ENCODE measurements at regions of chr15 and their contacts with region 1.

Region 1: DNA sequence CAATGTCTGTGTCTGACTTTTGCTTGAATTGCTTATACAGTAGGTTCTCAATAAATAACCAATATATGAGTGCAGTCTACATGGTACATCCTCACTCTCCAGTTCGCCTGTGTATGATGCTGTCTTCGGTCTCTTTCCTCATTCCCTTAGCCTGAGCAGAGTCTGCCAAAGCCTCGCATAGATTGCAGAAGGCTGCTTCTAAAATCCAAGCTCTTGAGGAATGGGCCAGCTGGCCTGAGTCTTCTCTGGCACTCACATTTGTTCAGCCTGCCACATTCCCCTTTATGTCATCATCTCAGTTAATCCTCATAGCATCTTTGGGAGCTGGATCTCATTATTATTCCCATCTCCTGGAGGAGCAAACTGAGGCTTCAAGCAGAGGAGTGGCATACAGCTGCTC is 27.2 kb upstream of the ADAMTS7 start:
- DNase-seq: no peak
- H3K4me3 ChIP-seq: no peak overlapping the region
- H3K27ac ChIP-seq: no peak overlapping the region
- H3K4me1 ChIP-seq: no peaks in the 10 kb centered on the region
- H3K27me3 ChIP-seq: peaks cover 0 to 4% of the 10 kb centered on the region in 2 experiments
- CTCF ChIP-seq: no peak
- POLR2A ChIP-seq: no peak

Region 2: GRCh38 chr15:78599189-78599588 is 239.3 kb before region 1 on chr15:
- CTCF ChIA-PET with region 1: no interaction called
- POLR2A ChIA-PET with region 1: no interaction called
- dilution Hi-C with region 1: no loop called
- intact Hi-C with region 1: no loop called
- DNase-seq: no peak
- H3K4me3 ChIP-seq: no peak overlapping the region
- H3K27ac ChIP-seq: no peak overlapping the region
- H3K4me1 ChIP-seq: no peaks in the 10 kb centered on the region
- H3K27me3 ChIP-seq: no peaks in the 10 kb centered on the region
- CTCF ChIP-seq: no peak
- POLR2A ChIP-seq: no peak

Region 3: DNA sequence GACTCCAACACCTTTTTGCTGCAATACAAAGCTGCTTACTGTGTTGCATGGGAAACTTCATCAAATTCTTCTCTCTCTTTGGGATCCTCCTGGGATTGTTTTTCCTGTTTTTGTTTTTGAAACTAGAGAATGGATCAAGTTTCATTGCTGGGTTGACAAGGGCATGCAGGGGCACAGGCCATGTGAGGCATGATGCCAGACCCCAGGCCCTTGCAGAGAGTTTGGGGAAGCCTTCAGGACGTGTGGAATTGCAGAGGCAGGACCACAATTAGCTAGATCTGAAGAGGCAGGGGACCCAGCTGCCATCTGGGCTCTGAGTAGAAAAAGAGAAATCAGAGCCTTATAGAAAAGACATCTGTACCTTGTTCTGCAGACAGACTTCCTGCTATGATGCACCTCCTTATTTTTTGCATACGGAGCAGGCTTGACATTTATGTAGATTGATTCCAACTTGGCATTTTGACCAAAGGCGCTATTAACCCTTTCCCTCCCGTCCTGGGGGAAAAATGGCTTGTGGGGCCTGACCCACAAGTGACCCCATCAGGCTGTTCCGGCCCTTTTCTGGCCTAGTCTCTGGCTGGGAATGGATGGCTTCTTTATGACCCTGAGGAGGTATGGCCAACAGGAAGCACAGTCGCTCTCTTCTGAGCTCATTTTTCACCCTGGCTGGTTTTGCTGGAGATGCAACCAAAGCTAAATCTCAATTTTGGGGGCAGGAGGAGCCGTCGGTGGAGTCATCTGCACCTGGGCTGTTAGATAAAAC is 153.1 kb before region 1 on chr15:
- CTCF ChIA-PET with region 1: no interaction called
- POLR2A ChIA-PET with region 1: no interaction called
- dilution Hi-C with region 1: no loop called
- intact Hi-C with region 1: no loop called
- DNase-seq: no peak
- H3K4me3 ChIP-seq: no peak overlapping the region
- H3K27ac ChIP-seq: no peak overlapping the region
- H3K4me1 ChIP-seq: no peaks in the 10 kb centered on the region
- H3K27me3 ChIP-seq: peaks cover 0 to 10% of the 10 kb centered on the region in 2 experiments
- CTCF ChIP-seq: no peak
- POLR2A ChIP-seq: no peak

Region 4: DNA sequence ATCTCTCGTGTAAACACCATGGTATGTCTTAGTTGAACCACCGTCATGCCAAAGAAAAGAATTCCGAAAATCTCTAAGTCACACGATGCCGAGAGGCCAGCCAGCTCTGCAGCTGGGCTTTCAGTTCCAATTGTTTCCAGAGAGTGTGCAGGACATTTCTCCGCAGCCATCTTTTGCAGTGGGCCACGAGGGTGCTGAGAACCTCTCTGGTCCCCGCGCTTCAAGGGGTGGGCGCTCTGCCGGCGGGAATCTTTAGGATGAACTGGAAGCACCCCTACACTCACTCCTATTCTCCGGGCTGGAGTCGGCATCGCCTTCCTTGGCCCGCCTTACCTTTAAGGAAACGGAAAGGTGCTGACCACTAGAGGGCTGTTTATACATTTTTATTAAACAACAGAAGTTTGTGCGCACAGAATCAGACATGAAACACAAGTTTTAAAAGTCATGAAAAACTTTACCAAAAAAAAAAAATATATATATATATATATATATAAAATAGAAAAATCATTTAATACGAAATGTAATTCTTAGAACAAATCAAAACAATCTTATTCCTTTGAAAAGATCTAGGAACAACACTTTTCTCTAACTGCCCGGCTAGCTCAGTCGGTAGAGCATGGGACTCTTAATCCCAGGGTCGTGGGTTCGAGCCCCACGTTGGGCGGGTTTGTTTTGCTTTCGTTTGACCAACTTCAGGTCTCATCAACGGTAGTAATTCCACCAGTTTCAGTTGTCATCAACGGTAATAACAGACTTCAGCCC is 21.7 kb after region 1 on chr15:
- CTCF ChIA-PET with region 1: interaction called, 3 read pairs
- POLR2A ChIA-PET with region 1: no interaction called
- dilution Hi-C with region 1: no loop called
- intact Hi-C with region 1: loop called (anchors 2 kb)
- DNase-seq: peak; percentile 76
- H3K4me3 ChIP-seq: peak overlapping the region; percentile 47 to 83 (median 74)
- H3K27ac ChIP-seq: peak overlapping the region; percentile 61
- H3K4me1 ChIP-seq: peaks cover 5% of the 10 kb centered on the region
- H3K27me3 ChIP-seq: peaks cover 0 to 2% of the 10 kb centered on the region in 2 experiments
- CTCF ChIP-seq: peak; percentile 42 to 44
- POLR2A ChIP-seq: no peak

Region 5: DNA sequence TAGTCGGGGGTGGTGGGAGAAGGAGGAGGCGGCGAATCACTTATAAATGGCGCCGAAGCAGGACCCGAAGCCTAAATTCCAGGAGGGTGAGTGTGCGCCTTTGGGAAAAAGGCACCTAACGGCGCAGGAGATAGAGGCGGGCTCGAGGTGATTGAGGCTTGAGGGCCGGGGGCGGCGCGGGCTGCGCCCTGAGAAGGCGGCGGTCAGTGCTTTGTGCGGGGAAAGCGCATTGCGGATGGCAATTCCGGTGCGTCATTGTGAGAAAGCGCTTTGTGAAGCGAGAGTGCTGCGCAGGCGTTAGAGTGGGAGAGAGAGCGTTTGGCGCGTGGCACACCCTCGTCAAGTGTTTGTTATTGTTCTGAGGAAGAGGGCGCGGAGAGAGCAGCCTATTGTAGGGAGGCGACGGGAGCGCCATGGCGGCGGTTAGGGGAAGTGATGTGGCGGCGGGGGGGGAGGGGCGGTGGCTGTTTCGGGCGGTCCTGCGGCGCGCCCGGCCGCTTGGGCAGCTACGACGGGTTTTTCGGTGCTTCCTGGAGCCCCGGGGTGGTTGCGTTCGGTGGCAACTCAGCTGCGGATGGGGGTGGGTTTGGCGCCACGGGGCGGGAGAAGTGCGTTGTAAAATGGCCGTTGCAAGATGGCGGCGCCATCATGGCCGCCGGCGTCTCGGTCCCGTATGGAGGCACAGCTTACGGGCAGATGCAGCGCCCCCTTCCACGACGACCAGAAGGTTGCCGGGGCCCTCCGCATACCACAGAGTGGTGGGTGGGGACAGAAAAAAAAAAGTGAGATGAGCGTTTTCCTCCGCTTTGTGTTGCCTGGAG is 34.7 kb after region 1 on chr15:
- CTCF ChIA-PET with region 1: no interaction called
- POLR2A ChIA-PET with region 1: no interaction called
- dilution Hi-C with region 1: no loop called
- intact Hi-C with region 1: no loop called
- DNase-seq: peak; percentile 91
- H3K4me3 ChIP-seq: peak overlapping the region; percentile 83 to 97 (median 91)
- H3K27ac ChIP-seq: peak overlapping the region; percentile 98
- H3K4me1 ChIP-seq: peaks cover 22% of the 10 kb centered on the region
- H3K27me3 ChIP-seq: no peaks in the 10 kb centered on the region
- CTCF ChIP-seq: peak; percentile 43 to 71
- POLR2A ChIP-seq: peak; percentile 30

Measured in endothelial cell of umbilical vein (primary cell).